Panc1 (cell line): ENCODE measurements at regions of chr14 and their contacts with region 1.

Region 1: DNA sequence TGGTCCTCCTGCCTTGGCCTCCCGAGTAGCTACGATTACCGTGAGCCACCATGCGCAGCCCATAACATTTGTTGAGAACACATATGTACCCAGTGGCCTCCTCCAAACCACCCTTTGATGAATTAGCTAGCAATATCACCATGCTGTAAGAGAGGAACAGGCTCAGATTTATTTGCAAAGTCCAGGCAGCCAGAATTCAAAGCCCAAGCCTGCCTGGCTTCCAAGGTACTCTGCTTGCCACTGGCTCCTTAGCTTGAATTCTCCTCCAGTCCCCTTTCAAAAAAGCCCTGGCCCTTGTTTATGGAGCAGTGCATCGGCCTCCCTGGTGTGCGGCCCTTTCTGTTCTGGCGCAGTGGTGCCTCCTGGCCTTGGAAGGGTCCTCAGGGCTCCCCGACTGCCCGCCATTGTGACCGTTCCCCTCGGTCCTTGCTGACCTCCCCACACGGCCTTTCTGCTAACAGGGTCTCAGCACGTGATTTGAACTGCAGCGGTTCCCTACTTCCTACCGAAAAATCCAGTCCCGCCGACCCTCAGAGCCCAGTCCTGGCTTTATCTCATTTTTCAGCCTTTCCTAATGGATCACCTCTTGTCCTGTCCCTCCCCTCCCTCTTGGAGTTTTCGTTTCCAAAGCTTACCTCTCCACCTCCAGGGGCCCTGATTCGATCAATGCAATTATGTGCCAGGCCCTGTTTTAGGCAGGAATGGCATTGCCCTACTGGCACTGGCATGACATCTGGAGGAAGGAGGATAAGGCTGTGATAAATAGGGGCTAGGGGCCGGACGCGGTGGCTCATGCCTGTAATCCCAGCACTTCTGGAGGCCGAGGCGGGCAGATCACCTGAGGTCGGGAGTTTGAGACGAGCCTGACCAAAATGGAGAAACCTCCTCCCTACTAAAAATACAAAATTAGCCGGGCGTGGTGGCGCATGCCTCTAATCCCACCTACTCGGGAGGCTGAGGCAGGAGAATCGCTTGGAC is 22.0 kb downstream of the SLC25A29 start:
- DNase-seq: no peak
- ATAC-seq: peak; percentile 2; the same call in 1 of the 2 replicates
- H3K4me3 ChIP-seq: peak overlapping the region; percentile 51 to 63
- H3K27ac ChIP-seq: peak overlapping the region; percentile 29; the same call in 1 of the 2 replicates
- H3K4me1 ChIP-seq: peaks cover 44% of the 10 kb centered on the region
- H3K27me3 ChIP-seq: no peaks in the 10 kb centered on the region
- CTCF ChIP-seq: no peak

Region 2: DNA sequence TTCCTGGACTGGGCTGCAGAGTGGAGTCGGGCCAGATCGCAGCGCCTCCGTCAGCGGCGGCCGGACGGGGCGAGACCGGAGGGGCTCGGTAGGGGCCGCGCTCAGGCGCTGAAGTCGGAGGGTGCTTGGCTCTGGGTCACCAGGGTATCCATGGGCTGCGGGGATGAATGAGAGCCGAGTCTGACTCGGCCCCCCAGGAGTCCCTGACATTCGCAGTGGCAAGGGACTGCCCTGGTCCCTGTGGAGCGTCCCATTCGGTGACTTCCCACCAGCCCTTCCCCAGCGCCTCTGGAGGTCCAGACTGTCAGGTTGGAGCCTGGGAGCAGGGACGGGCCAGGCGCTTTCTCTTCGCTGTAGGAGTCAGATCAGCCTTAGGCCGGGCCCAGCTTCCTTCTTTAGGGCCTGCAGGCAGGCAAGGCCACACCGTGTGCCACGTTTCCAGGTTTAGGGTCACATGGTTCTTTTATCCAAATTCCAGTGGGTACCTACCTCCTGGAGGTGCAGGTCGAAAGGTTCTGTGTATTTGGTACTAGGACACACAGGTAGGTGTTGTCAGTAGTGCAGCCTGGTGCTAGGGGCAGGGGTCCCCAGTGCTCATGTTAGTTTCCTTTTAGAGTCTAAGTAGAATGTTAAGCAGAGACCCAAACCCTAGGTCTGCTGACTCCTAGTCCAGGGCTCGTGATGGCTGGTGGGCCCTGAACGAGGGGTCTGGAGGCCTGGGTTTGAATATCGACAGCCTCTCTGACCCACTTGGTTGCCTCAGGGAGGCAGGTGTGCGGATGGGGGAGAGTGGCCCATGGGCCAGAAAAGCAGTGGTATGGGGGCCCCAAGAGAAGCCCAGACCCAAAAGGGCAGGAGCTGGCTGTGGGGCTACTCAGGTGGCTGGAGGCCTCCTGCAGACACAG is 23.2 kb after region 1 on chr14:
- CTCF ChIA-PET with region 1: interaction called, 5 read pairs
- POLR2A ChIA-PET with region 1: interaction called, 17 read pairs
- in situ Hi-C with region 1: no loop called
- intact Hi-C with region 1: no loop called
- DNase-seq: no peak
- ATAC-seq: no peak
- H3K4me3 ChIP-seq: peak overlapping the region; percentile 63 to 68
- H3K27ac ChIP-seq: peak overlapping the region; percentile 61; the same call in 1 of the 2 replicates
- H3K4me1 ChIP-seq: peaks cover 8% of the 10 kb centered on the region
- H3K27me3 ChIP-seq: no peaks in the 10 kb centered on the region
- CTCF ChIP-seq: no peak